SK-N-SH (cell line): ENCODE measurements at regions of chr2 and their contacts with region 1.

Region 1: DNA sequence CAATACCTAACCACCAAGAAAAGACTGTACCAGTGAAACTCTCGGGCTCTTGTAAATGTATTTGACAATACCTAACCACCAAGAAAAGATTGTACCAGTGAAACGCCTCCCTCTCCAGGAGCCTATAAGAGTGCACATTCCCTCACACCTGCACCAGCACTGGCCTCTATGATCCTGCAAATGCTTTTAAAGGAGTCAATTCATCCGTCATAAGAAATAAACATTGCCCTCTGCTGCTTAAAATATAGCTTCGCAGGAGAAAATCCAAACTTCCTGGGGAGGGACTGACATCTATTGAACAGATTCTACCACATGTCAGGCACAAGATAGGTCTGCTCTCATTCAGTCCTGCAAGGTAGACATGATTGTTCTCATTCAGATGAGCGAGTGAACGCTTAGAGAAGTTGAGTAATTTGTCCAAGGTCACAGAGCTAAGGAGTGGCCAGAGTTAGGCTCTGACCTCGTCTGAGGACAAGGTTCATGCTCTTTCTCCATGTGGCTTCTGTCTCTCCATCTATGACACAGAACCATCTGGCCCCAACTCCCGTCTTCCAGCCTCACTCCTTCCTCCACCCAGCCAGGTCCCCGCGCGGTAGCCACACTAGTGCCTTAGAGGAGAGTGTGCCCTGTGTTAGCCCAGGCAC is 38.7 kb downstream of the MCFD2 start:
- DNase-seq: peak; percentile 73
- H3K4me3 ChIP-seq: no peak overlapping the region
- H3K27ac ChIP-seq: peak overlapping the region; percentile 7 to 76
- H3K4me1 ChIP-seq: peaks cover 35 to 38% of the 10 kb centered on the region in 2 experiments; a peak in 3 of 4 replicates
- H3K27me3 ChIP-seq: no peaks in the 10 kb centered on the region
- CTCF ChIP-seq: peak; percentile 80
- EP300 ChIP-seq: no peak
- RAD21 ChIP-seq: peak; percentile 91

Region 2: DNA sequence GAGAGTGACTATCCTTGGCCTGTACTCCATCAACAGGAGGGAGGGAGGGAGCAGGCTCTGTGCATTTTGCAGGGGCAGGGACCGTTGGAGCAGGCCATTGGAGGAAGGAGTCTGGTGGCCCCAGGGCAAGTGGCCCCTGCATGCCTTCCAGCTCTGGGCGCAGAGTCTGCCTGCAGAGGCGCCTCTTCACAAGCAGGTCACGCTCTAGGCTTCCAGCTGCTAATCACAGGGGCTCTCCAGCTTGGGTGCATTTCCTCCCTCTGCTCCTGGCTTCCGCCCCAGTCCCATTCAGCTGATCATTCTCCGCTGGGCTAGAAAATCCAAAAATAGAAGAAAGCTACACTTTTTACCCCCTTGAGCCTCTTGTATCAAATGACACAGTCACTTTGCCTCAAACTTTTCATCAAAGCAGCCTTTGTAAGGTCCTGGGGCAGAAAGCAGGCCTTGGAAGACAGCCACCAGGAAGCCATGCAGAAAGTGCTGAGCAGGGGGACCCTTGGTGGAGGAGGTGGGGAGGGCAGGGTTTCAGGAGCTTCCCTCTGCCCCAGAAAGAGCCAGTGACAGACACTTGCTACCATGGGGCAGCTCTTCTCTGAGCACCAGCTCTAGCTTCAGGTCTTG is 386.2 kb before region 1 on chr2:
- CTCF ChIA-PET with region 1: no interaction called
- POLR2A ChIA-PET with region 1: no interaction called
- DNase-seq: no peak
- H3K4me3 ChIP-seq: no peak overlapping the region
- H3K27ac ChIP-seq: no peak overlapping the region
- H3K4me1 ChIP-seq: peaks cover 17 to 32% of the 10 kb centered on the region in 2 experiments; a peak in 3 of 4 replicates
- H3K27me3 ChIP-seq: no peaks in the 10 kb centered on the region
- CTCF ChIP-seq: no peak
- EP300 ChIP-seq: no peak
- RAD21 ChIP-seq: no peak

Region 3: DNA sequence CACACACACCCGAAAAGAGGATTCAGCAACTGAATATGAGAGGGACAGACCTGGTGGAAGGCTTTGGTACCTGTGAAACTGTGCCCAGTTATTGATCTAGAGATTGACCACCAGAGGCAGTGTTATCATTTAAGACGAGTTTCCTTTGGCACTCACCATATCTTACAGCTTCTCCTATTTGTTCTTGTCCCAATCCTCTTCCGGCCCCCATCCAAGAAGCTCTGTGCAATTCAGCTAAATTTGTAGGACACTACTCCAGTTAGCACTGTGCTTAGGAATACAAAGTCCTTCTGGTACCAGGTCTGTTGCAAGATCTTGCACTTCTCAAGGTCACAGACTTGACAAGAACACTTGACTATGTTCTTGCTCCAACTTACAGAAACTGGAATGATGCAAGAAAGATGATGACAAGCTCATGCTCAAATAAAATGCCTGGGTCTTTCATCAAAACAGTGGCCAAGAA is 219.8 kb before region 1 on chr2:
- CTCF ChIA-PET with region 1: interaction called, 11 read pairs
- POLR2A ChIA-PET with region 1: no interaction called
- DNase-seq: peak; percentile 52
- H3K4me3 ChIP-seq: no peak overlapping the region
- H3K27ac ChIP-seq: no peak overlapping the region
- H3K4me1 ChIP-seq: peaks cover 7 to 18% of the 10 kb centered on the region in 2 experiments; a peak in 2 of 4 replicates
- H3K27me3 ChIP-seq: no peaks in the 10 kb centered on the region
- CTCF ChIP-seq: peak; percentile 67
- EP300 ChIP-seq: no peak
- RAD21 ChIP-seq: peak; percentile 68

Region 4: GRCh38 chr2:46763861-46764260 is 113.0 kb before region 1 on chr2:
- CTCF ChIA-PET with region 1: no interaction called
- POLR2A ChIA-PET with region 1: no interaction called
- DNase-seq: no peak
- H3K4me3 ChIP-seq: no peak overlapping the region
- H3K27ac ChIP-seq: no peak overlapping the region
- H3K4me1 ChIP-seq: peaks cover 3 to 13% of the 10 kb centered on the region in 2 experiments
- H3K27me3 ChIP-seq: no peaks in the 10 kb centered on the region
- CTCF ChIP-seq: no peak
- EP300 ChIP-seq: no peak
- RAD21 ChIP-seq: no peak

Region 5: DNA sequence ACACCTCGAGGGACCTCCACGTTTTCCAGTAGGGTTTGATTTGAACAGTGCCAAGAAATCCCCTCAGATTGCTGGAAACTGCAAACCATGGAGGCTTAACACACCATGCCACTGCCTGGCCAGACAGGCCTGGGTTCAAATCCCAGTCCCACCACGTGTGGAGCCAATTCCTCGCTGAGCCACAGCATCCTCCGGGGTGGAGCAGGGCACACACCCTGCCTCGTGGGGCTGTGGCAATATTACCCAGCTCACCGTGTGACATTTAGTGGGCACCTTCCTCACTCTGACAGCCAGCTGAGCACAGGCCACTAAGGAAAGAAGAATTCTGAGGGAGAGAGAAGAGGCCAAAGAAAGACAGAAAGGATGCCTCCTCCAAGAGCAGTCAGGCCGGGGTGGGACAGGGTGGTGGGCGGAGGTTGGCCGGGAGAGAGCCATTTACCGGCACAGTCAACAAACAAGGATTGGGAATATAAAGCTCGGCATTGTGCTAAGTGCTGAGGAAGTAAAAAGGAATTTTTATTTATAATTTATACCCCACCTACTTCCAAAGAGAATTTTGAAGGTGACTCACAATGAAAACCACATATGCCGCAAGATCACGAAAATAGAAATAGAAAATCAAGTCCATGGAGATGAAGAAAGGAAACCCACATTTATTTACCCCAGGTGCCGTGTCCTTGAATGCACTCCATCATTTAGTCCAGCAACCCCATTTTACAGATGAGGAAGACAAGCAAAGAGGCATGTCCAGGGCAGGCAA is 72.8 kb before region 1 on chr2:
- CTCF ChIA-PET with region 1: interaction called, 19 read pairs
- POLR2A ChIA-PET with region 1: no interaction called
- DNase-seq: peak; percentile 30
- H3K4me3 ChIP-seq: no peak overlapping the region
- H3K27ac ChIP-seq: peak overlapping the region; percentile 48 to 100
- H3K4me1 ChIP-seq: peaks cover 14 to 74% of the 10 kb centered on the region in 2 experiments; a peak in 3 of 4 replicates
- H3K27me3 ChIP-seq: no peaks in the 10 kb centered on the region
- CTCF ChIP-seq: no peak
- EP300 ChIP-seq: peak; percentile 73 to 99; a peak in 3 of 4 replicates
- RAD21 ChIP-seq: no peak

Region 6: DNA sequence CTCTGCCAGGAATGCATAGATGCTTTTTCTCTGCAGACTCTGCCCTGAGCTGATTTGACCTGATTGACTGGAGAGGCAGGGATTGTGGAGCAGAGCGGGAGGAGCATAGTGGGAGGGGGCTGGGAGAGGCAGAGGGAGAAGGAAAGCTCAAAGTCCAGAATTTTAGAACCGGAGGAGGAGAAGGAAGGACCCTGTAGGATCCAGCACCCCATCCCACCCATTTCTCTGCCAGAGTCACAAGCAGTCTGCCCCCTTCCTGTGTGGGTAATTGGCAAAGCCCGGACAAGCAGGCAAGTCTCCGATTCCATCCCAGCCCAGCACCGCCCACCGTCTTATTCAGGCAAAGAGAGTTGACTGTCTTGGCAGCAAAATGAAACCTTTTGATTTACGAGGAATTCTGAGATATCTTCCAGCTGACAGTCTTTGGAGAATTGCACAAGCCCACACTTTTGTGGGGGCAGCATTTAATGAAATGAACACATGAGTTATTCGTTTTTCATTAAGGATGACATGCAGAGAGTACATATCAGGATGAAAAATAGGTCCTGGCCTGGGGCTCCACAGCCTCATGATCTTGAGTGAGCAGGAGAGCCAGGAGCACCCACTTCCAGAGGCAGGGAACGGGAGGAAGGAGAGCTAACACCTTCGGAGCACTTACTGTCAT is 64.4 kb before region 1 on chr2:
- CTCF ChIA-PET with region 1: interaction called, 11 read pairs
- POLR2A ChIA-PET with region 1: no interaction called
- DNase-seq: peak; percentile 50
- H3K4me3 ChIP-seq: peak overlapping the region; percentile 19 to 26; a peak in 2 of 4 replicates
- H3K27ac ChIP-seq: peak overlapping the region; percentile 94 to 97
- H3K4me1 ChIP-seq: peaks cover 34 to 42% of the 10 kb centered on the region in 2 experiments
- H3K27me3 ChIP-seq: no peaks in the 10 kb centered on the region
- CTCF ChIP-seq: 0 out of 2 replicates have a peak, but pooled peaks have one; percentile 11
- EP300 ChIP-seq: peak; percentile 89 to 97
- RAD21 ChIP-seq: no peak